ENCODE measurements at regions of chr1 and their contacts with region 1.

Region 1: GRCh38 chr1:204128964-204129896 is 22.6 kb downstream of the ETNK2 start:
- DNase-seq: peak; percentile 81
- ATAC-seq: peak; percentile 91

Region 2: GRCh38 chr1:203873094-203873493 is 256.1 kb before region 1 on chr1:
- intact Hi-C with region 1: loop called (anchors 2 kb)
- DNase-seq: no peak
- ATAC-seq: no peak

Region 3: GRCh38 chr1:204072931-204073836 is 56.0 kb before region 1 on chr1 and contains the start of gene SOX13:
- intact Hi-C with region 1: loop called (anchors 10 kb)
- DNase-seq: peak; percentile 94
- ATAC-seq: peak; percentile 93
- total RNA-seq, gene SOX13: 56.3 TPM

Measured in sciatic nerve (tissue), 2 donors.